MCF 10A (cell line): ENCODE measurements at regions of chr12 and their contacts with region 1.

Region 1: DNA sequence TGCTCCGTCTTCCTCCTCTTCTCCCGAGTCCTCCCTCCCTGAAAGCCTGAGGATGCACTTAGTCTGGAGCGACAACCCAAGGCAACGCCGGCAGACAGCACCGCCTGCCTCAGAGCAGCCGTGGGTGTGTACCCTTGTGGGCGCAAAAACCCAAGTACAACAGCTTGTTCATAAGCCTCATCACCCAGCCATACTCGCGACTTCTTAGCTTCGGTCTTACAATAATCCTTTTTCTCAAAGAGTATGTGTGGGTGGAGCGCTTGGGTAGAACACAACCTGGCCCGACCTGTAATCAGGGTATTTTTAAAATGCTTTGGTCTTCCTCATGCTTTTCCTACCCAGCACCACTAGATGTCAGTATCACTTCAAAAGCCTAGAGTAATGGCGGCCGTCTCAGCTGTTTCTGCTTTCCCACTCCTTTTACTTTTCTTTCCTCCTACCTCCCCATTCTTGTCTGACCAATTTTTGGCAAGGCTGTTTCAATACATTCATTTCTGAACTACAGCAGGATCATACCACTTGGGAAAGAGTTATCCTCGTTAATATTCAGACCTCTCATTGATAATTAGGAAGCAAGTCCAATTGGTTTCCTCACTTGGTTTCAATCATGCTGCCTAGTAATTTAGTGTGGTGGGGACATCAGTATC is 198.9 kb downstream of the EPS8 start:
- DNase-seq: peak; percentile 79
- H3K4me3 Mint-ChIP-seq: peak overlapping the region; percentile 72
- H3K27ac Mint-ChIP-seq: peak overlapping the region; percentile 95
- H3K4me1 Mint-ChIP-seq: peaks cover 10% of the 10 kb centered on the region
- H3K27me3 Mint-ChIP-seq: no peaks in the 10 kb centered on the region
- CTCF ChIP-seq: peak; percentile 82

Region 2: DNA sequence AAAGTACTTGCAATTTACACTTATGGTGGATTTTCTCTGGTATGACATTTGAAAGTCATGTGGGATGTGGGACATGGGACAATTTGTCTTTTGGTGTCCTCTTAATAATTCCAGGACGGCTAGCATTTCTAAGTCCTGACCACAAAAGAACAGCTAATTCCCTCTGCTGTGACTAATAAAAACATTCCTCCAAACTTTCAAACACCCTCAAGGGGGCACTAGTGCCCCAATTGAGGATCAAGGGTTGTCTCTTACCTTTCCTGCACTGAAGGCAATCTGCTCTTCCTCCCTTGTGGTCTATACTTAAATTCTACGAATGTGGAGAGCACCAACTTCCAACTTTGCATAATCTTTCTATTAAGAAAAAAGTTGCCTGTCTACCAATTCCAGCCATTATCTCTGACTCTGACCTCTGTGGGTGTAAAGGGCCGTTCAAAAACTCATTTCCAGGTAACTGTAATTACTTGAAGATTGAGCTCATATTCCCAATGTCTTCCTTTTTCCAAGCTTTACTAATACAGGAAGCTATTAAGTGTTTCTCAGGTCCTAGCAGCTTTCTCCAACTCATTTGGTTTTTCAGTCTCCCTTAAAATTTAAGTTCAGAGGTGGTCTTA is 57.8 kb before region 1 on chr12:
- CTCF ChIA-PET with region 1: interaction called, 218 read pairs
- POLR2A ChIA-PET with region 1: interaction called, 7 read pairs
- intact Hi-C with region 1: no loop called
- DNase-seq: peak; percentile 89
- H3K4me3 Mint-ChIP-seq: no peak overlapping the region
- H3K27ac Mint-ChIP-seq: peak overlapping the region; percentile 57
- H3K4me1 Mint-ChIP-seq: peaks cover 29% of the 10 kb centered on the region
- H3K27me3 Mint-ChIP-seq: no peaks in the 10 kb centered on the region
- CTCF ChIP-seq: peak; percentile 71

Region 3: DNA sequence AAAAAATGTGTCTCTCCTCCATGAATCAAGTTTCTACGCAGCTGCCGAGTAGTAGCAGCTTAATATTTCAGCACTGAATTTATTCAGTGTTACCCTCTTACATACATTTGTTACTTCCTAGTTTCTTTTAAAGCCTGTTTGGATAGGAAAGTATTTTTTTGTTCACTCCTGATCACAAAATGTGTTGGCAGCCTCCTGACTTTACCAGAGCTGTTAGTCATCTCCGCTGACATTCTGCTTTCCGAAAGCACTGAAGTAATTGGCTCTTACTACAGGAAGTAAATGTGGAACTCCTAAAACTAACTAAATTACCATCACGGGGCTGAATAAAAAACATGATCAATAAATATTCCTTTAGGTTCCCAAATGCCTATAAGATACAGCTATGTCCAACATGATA is 26.6 kb before region 1 on chr12:
- CTCF ChIA-PET with region 1: interaction called, 12 read pairs
- POLR2A ChIA-PET with region 1: no interaction called
- intact Hi-C with region 1: no loop called
- DNase-seq: peak; percentile 9
- H3K4me3 Mint-ChIP-seq: peak overlapping the region; percentile 4
- H3K27ac Mint-ChIP-seq: peak overlapping the region; percentile 16
- H3K4me1 Mint-ChIP-seq: peaks cover 7% of the 10 kb centered on the region
- H3K27me3 Mint-ChIP-seq: no peaks in the 10 kb centered on the region
- CTCF ChIP-seq: no peak

Region 4: DNA sequence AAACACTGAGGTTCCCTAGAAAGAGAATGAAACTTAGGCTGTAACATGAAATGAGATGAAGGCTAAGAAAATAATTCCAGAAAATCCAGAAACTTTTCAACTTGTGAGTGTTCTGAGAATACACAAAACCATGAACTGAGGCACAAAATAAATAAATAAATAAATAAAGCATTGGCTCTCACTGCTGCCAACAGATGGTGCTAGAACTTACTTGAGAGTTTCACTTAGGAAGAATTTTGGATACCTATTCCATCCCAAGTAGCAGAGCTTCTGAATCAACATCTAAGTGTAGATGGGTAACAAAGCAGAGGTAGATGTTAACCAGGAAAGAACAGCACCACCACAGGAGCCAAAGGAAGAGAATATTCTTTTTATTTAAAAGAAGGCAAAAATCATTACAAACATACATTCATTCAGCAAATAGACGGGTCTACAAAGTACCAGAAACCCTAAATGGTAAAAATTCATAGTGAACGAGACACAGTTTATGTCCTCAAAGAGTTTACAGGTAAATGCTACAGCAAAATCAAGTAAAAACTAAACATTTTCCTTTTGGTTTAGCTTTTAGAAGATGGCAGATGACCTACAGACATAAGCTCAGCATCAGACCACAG is 182.2 kb after region 1 on chr12:
- CTCF ChIA-PET with region 1: interaction called, 10 read pairs
- POLR2A ChIA-PET with region 1: no interaction called
- intact Hi-C with region 1: loop called (anchors 5 kb)
- DNase-seq: peak; percentile 55
- H3K4me3 Mint-ChIP-seq: no peak overlapping the region
- H3K27ac Mint-ChIP-seq: no peak overlapping the region
- H3K4me1 Mint-ChIP-seq: peaks cover 44% of the 10 kb centered on the region
- H3K27me3 Mint-ChIP-seq: no peaks in the 10 kb centered on the region
- CTCF ChIP-seq: peak; percentile 42

Region 5: GRCh38 chr12:15851045-15851620 is 260.8 kb after region 1 on chr12:
- CTCF ChIA-PET with region 1: interaction called, 222 read pairs
- POLR2A ChIA-PET with region 1: interaction called, 8 read pairs
- intact Hi-C with region 1: loop called (anchors 1 kb)
- DNase-seq: no peak
- H3K4me3 Mint-ChIP-seq: no peak overlapping the region
- H3K27ac Mint-ChIP-seq: no peak overlapping the region
- H3K4me1 Mint-ChIP-seq: peaks cover 25% of the 10 kb centered on the region
- H3K27me3 Mint-ChIP-seq: no peaks in the 10 kb centered on the region
- CTCF ChIP-seq: no peak

Region 6: GRCh38 chr12:15899282-15899870 is 309.1 kb after region 1 on chr12:
- CTCF ChIA-PET with region 1: interaction called, 11 read pairs
- POLR2A ChIA-PET with region 1: no interaction called
- intact Hi-C with region 1: loop called (anchors 1 kb)
- DNase-seq: peak; percentile 59
- H3K4me3 Mint-ChIP-seq: no peak overlapping the region
- H3K27ac Mint-ChIP-seq: peak overlapping the region; percentile 16
- H3K4me1 Mint-ChIP-seq: no peaks in the 10 kb centered on the region
- H3K27me3 Mint-ChIP-seq: no peaks in the 10 kb centered on the region
- CTCF ChIP-seq: peak; percentile 59

Region 7: DNA sequence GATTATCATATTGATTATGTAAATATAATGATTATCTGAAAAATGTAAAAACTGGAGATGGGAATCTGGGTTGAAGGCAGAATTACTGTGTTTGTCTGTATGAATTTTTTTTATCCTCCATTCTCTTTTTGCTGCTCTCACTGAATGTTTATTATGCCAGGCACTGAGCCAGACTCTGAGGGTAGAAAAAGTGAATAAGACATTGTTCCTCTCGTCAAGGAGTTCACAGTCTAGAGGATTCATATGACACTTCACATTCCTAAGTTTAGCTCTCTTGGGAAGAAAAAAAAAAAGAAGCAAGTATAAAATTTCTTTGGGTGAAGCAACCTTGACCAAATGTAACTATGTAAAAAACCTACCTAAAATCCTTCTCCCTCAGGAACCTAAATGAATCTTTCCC is 1136.6 kb after region 1 on chr12:
- CTCF ChIA-PET with region 1: no interaction called
- POLR2A ChIA-PET with region 1: no interaction called
- intact Hi-C with region 1: no loop called
- DNase-seq: peak; percentile 63
- H3K4me3 Mint-ChIP-seq: no peak overlapping the region
- H3K27ac Mint-ChIP-seq: no peak overlapping the region
- H3K4me1 Mint-ChIP-seq: no peaks in the 10 kb centered on the region
- H3K27me3 Mint-ChIP-seq: no peaks in the 10 kb centered on the region
- CTCF ChIP-seq: no peak